CD8-positive, alpha-beta T cell (primary cell): ENCODE measurements at regions of chr20 and their contacts with region 1.

Region 1: DNA sequence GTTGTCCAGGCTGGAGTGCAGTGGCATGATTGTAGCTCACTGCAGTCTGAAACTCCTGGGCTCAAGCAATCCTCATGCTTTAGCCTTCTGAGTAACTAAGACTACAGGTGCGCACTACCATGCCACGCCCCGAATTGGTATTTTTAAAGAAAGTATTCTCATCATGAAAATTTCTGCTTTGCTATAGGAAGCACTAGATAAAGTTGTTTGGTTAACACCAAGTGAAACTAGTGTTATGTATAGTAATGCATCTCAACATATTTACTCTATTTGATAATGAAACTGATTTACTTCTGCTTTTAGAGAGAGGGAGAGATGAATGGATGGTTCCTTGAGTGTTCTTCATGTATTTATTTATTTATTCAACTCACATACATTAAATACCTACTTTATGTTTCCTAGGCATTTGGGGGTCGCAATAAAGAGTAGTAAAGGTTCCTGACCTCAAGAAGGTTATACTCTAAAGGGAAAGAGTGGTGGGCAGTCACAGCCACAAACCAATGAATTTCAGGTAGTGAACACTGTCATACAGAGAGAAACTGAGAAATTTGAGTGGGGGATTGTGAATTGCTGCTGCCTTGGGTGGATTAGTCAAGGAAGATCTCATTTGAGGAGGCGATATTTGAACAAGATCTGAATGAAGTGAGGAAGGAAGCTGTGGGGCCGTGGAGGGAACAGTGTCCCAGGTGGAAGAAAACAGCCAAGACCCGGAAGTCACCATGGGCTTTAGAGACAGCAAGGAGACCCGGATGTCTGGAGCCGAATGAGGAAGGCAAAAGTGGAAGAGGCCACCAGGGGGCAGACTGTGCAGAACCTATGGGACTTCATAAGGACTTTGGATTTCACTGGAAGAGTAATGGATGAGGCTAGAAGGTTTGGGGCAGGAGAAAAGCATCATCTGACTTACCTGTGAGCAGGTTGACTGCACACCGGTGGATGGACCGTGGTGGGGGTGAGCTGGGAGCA is 185.6 kb downstream of the TSHZ2 start:
- DNase-seq: peak in 8 of 9 experiments; percentile 2 to 67 (median 46)
- ATAC-seq: no peak
- H3K4me3 ChIP-seq: no peak overlapping the region
- H3K4me3 Mint-ChIP-seq: no peak overlapping the region
- H3K27ac ChIP-seq: no peak overlapping the region
- H3K27ac Mint-ChIP-seq: no peak overlapping the region
- H3K4me1 ChIP-seq: no peaks in the 10 kb centered on the region
- H3K4me1 Mint-ChIP-seq: no peaks in the 10 kb centered on the region
- H3K27me3 ChIP-seq: peaks cover 0 to 2% of the 10 kb centered on the region in 2 experiments
- H3K27me3 Mint-ChIP-seq: peaks cover 6% of the 10 kb centered on the region
- CTCF ChIP-seq: peak; percentile 46

Region 2: GRCh38 chr20:52251136-52251700 is 906.5 kb before region 1 on chr20:
- CTCF ChIA-PET with region 1: no interaction called
- POLR2A ChIA-PET with region 1: no interaction called
- intact Hi-C with region 1: no loop called
- DNase-seq: no peak
- ATAC-seq: no peak
- H3K4me3 ChIP-seq: no peak overlapping the region
- H3K4me3 Mint-ChIP-seq: no peak overlapping the region
- H3K27ac ChIP-seq: no peak overlapping the region
- H3K27ac Mint-ChIP-seq: no peak overlapping the region
- H3K4me1 ChIP-seq: no peaks in the 10 kb centered on the region
- H3K4me1 Mint-ChIP-seq: no peaks in the 10 kb centered on the region
- H3K27me3 ChIP-seq: no peaks in the 10 kb centered on the region
- H3K27me3 Mint-ChIP-seq: peaks cover 17% of the 10 kb centered on the region
- CTCF ChIP-seq: no peak

Region 3: GRCh38 chr20:53216856-53217576 is 59.3 kb after region 1 on chr20:
- CTCF ChIA-PET with region 1: interaction called, 3 read pairs
- POLR2A ChIA-PET with region 1: no interaction called
- intact Hi-C with region 1: loop called in 1 of 2 experiments (anchors 5 kb)
- DNase-seq: peak; percentile 72 to 92 (median 80)
- ATAC-seq: peak; percentile 89
- H3K4me3 ChIP-seq: peak overlapping the region in 1 of 2 experiments; percentile 13
- H3K4me3 Mint-ChIP-seq: peak overlapping the region; percentile 60
- H3K27ac ChIP-seq: no peak overlapping the region
- H3K27ac Mint-ChIP-seq: no peak overlapping the region
- H3K4me1 ChIP-seq: peaks cover 22% of the 10 kb centered on the region
- H3K4me1 Mint-ChIP-seq: peaks cover 18% of the 10 kb centered on the region
- H3K27me3 ChIP-seq: no peaks in the 10 kb centered on the region
- H3K27me3 Mint-ChIP-seq: peaks cover 11% of the 10 kb centered on the region
- CTCF ChIP-seq: peak; percentile 97

Region 4: GRCh38 chr20:53939572-53940359 is 782.0 kb after region 1 on chr20:
- CTCF ChIA-PET with region 1: interaction called, 3 read pairs
- POLR2A ChIA-PET with region 1: no interaction called
- intact Hi-C with region 1: loop called in 1 of 2 experiments (anchors 5 kb)
- DNase-seq: peak; percentile 38 to 83 (median 67)
- ATAC-seq: peak; percentile 76
- H3K4me3 ChIP-seq: no peak overlapping the region
- H3K4me3 Mint-ChIP-seq: no peak overlapping the region
- H3K27ac ChIP-seq: no peak overlapping the region
- H3K27ac Mint-ChIP-seq: no peak overlapping the region
- H3K4me1 ChIP-seq: peaks cover 31% of the 10 kb centered on the region
- H3K4me1 Mint-ChIP-seq: peaks cover 43% of the 10 kb centered on the region
- H3K27me3 ChIP-seq: no peaks in the 10 kb centered on the region
- H3K27me3 Mint-ChIP-seq: no peaks in the 10 kb centered on the region
- CTCF ChIP-seq: peak; percentile 75

Region 5: DNA sequence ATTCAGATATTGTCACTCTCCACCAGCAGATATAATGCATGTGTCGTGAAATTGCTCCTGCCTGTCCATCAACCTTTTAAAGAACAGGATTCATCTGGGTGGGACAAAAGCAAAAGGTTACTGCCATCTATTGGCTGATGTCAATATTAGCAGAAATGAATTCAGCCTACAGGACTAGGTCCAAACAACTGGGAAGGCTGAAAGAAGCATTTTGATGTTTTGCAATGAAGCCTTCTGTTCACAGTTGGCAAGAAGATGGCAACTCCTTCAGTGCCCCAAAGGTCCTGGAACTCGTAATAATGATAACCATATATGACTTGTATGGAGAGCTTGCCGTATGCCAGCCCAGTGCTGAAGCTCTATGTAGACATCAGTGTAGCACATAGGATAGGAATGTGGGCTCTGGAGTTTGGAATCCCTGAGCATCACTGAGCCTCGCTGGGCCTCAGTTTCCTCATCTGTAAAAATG is 905.1 kb after region 1 on chr20:
- CTCF ChIA-PET with region 1: interaction called, 4 read pairs
- POLR2A ChIA-PET with region 1: no interaction called
- intact Hi-C with region 1: loop called in 1 of 2 experiments (anchors 5 kb)
- DNase-seq: peak in 2 of 9 experiments; percentile 40 to 60
- ATAC-seq: no peak
- H3K4me3 ChIP-seq: no peak overlapping the region
- H3K4me3 Mint-ChIP-seq: no peak overlapping the region
- H3K27ac ChIP-seq: no peak overlapping the region
- H3K27ac Mint-ChIP-seq: no peak overlapping the region
- H3K4me1 ChIP-seq: peaks cover 24% of the 10 kb centered on the region
- H3K4me1 Mint-ChIP-seq: no peaks in the 10 kb centered on the region
- H3K27me3 ChIP-seq: no peaks in the 10 kb centered on the region
- H3K27me3 Mint-ChIP-seq: no peaks in the 10 kb centered on the region
- CTCF ChIP-seq: peak; percentile 53